ENCODE measurements at regions of chr6 and their contacts with region 1.

Region 1: GRCh38 chr6:11653028-11653583 is 115.6 kb downstream of the TMEM170B start:
- DNase-seq: peak in 7 of 9 experiments; percentile 7 to 52 (median 33)
- ATAC-seq: peak; percentile 78
- H3K4me3 ChIP-seq: no peak overlapping the region
- H3K4me3 Mint-ChIP-seq: no peak overlapping the region
- H3K27ac ChIP-seq: no peak overlapping the region
- H3K27ac Mint-ChIP-seq: no peak overlapping the region
- H3K4me1 ChIP-seq: peaks cover 4% of the 10 kb centered on the region
- H3K4me1 Mint-ChIP-seq: peaks cover 4% of the 10 kb centered on the region
- H3K27me3 ChIP-seq: no peaks in the 10 kb centered on the region
- H3K27me3 Mint-ChIP-seq: peaks cover 5% of the 10 kb centered on the region
- CTCF ChIP-seq: no peak

Region 2: GRCh38 chr6:11665604-11666326 is 12.7 kb after region 1 on chr6:
- CTCF ChIA-PET with region 1: interaction called, 25 read pairs
- POLR2A ChIA-PET with region 1: no interaction called
- intact Hi-C with region 1: no loop called
- DNase-seq: no peak
- ATAC-seq: no peak
- H3K4me3 ChIP-seq: no peak overlapping the region
- H3K4me3 Mint-ChIP-seq: no peak overlapping the region
- H3K27ac ChIP-seq: no peak overlapping the region
- H3K27ac Mint-ChIP-seq: no peak overlapping the region
- H3K4me1 ChIP-seq: no peaks in the 10 kb centered on the region
- H3K4me1 Mint-ChIP-seq: no peaks in the 10 kb centered on the region
- H3K27me3 ChIP-seq: no peaks in the 10 kb centered on the region
- H3K27me3 Mint-ChIP-seq: peaks cover 22% of the 10 kb centered on the region
- CTCF ChIP-seq: no peak

Region 3: DNA sequence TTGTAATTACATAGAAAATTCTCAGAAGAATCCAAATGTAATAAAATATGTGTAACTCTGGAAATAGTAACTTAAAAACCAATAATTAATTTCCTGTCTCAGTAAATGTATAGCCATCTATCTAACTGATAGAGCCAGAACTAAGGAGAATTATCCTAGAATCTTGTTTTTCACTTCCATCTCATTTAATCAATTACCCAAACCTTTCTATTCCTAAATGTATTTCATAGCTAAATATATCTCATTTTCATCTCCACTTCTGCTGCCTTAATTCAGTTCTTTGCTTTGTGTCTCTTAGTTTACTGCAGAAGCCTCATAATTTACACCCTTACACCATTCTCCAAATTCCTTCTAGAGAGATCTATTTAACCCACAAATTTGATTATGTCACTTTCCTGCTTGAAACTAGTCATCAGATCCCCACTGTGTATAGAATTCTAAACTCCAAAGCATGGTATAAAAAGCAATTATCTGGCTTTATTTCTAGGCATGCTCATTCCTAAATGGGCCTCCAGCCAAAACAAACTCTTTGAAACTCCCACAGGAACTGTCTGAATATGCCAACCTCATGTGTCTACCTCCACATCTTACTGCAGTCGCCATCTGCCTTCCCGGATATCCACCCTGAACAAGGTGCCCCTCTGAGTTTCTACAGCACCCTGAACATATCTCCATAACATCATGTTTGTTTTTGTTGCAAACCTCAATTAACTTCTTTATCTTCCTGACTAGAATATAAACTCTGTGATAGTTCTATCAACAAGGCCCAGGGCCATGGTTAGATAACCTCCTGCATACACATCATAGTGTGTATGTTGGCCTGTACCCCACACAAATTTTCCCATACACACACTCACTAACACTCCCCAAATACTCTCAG is 196.0 kb after region 1 on chr6:
- CTCF ChIA-PET with region 1: no interaction called
- POLR2A ChIA-PET with region 1: no interaction called
- intact Hi-C with region 1: no loop called
- DNase-seq: no peak
- ATAC-seq: no peak
- H3K4me3 ChIP-seq: no peak overlapping the region
- H3K4me3 Mint-ChIP-seq: no peak overlapping the region
- H3K27ac ChIP-seq: no peak overlapping the region
- H3K27ac Mint-ChIP-seq: no peak overlapping the region
- H3K4me1 ChIP-seq: no peaks in the 10 kb centered on the region
- H3K4me1 Mint-ChIP-seq: no peaks in the 10 kb centered on the region
- H3K27me3 ChIP-seq: no peaks in the 10 kb centered on the region
- H3K27me3 Mint-ChIP-seq: no peaks in the 10 kb centered on the region
- CTCF ChIP-seq: no peak

Region 4: GRCh38 chr6:11947063-11947974 is 294.2 kb after region 1 on chr6:
- CTCF ChIA-PET with region 1: no interaction called
- POLR2A ChIA-PET with region 1: no interaction called
- intact Hi-C with region 1: no loop called
- DNase-seq: peak in 2 of 9 experiments; percentile 15 to 33
- ATAC-seq: peak; percentile 54
- H3K4me3 ChIP-seq: no peak overlapping the region
- H3K4me3 Mint-ChIP-seq: no peak overlapping the region
- H3K27ac ChIP-seq: no peak overlapping the region
- H3K27ac Mint-ChIP-seq: no peak overlapping the region
- H3K4me1 ChIP-seq: no peaks in the 10 kb centered on the region
- H3K4me1 Mint-ChIP-seq: no peaks in the 10 kb centered on the region
- H3K27me3 ChIP-seq: no peaks in the 10 kb centered on the region
- H3K27me3 Mint-ChIP-seq: no peaks in the 10 kb centered on the region
- CTCF ChIP-seq: peak; percentile 40

Region 5: DNA sequence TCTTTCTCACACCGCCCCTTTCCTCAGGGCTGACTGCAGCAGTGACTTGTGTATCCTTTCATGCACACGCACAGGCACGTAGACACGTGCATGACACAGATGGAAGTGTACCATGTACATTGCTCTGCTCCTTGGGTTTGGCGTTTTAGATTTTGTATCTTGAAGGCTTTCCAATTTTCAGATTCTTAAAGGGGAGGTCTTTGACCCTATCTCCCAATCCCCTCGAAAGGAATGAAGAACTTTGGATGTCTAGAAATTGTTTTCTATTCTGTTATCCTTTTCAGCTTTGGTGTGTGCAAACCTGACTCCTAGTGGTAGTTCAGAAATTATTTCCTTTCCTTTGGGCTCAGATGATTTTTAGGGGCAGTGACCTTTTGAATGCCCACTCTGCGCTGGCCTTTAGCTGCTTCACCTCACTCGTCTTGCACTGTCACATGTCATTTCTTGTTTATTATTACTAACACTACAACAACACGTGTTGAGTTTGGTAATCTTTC is 422.0 kb after region 1 on chr6:
- CTCF ChIA-PET with region 1: interaction called, 18 read pairs
- POLR2A ChIA-PET with region 1: no interaction called
- intact Hi-C with region 1: loop called (anchors 1 to 5 kb)
- DNase-seq: peak in 3 of 9 experiments; percentile 21 to 51 (median 36)
- ATAC-seq: peak; percentile 73
- H3K4me3 ChIP-seq: no peak overlapping the region
- H3K4me3 Mint-ChIP-seq: no peak overlapping the region
- H3K27ac ChIP-seq: no peak overlapping the region
- H3K27ac Mint-ChIP-seq: no peak overlapping the region
- H3K4me1 ChIP-seq: peaks cover 13% of the 10 kb centered on the region
- H3K4me1 Mint-ChIP-seq: peaks cover 48% of the 10 kb centered on the region
- H3K27me3 ChIP-seq: no peaks in the 10 kb centered on the region
- H3K27me3 Mint-ChIP-seq: no peaks in the 10 kb centered on the region
- CTCF ChIP-seq: peak; percentile 54

Region 6: GRCh38 chr6:12233693-12234571 is 580.8 kb after region 1 on chr6:
- CTCF ChIA-PET with region 1: interaction called, 74 read pairs
- POLR2A ChIA-PET with region 1: no interaction called
- intact Hi-C with region 1: loop called in 1 of 2 experiments (anchors 1 kb)
- DNase-seq: peak in 7 of 9 experiments; percentile 7 to 76 (median 34)
- ATAC-seq: peak; percentile 73
- H3K4me3 ChIP-seq: no peak overlapping the region
- H3K4me3 Mint-ChIP-seq: peak overlapping the region; percentile 6
- H3K27ac ChIP-seq: no peak overlapping the region
- H3K27ac Mint-ChIP-seq: no peak overlapping the region
- H3K4me1 ChIP-seq: peaks cover 14% of the 10 kb centered on the region
- H3K4me1 Mint-ChIP-seq: peaks cover 21% of the 10 kb centered on the region
- H3K27me3 ChIP-seq: no peaks in the 10 kb centered on the region
- H3K27me3 Mint-ChIP-seq: no peaks in the 10 kb centered on the region
- CTCF ChIP-seq: peak; percentile 79

Region 7: GRCh38 chr6:12605888-12606345 is 952.8 kb after region 1 on chr6:
- CTCF ChIA-PET with region 1: interaction called, 24 read pairs
- POLR2A ChIA-PET with region 1: no interaction called
- intact Hi-C with region 1: loop called (anchors 1 kb)
- DNase-seq: peak in 5 of 9 experiments; percentile 4 to 55 (median 22)
- ATAC-seq: no peak
- H3K4me3 ChIP-seq: no peak overlapping the region
- H3K4me3 Mint-ChIP-seq: no peak overlapping the region
- H3K27ac ChIP-seq: no peak overlapping the region
- H3K27ac Mint-ChIP-seq: no peak overlapping the region
- H3K4me1 ChIP-seq: no peaks in the 10 kb centered on the region
- H3K4me1 Mint-ChIP-seq: no peaks in the 10 kb centered on the region
- H3K27me3 ChIP-seq: no peaks in the 10 kb centered on the region
- H3K27me3 Mint-ChIP-seq: peaks cover 13% of the 10 kb centered on the region
- CTCF ChIP-seq: no peak